Prostate gland (tissue), 2 donors: ENCODE measurements at regions of chr12 and their contacts with region 1.

Region 1: GRCh38 chr12:67068761-67069450 is 200.3 kb upstream of the CAND1 start:
- DNase-seq: peak; percentile 60
- H3K4me3 ChIP-seq: peak overlapping the region; percentile 56 to 64
- H3K27ac ChIP-seq: peak overlapping the region; percentile 77 to 83
- H3K4me1 ChIP-seq: peaks cover 7% of the 10 kb centered on the region
- H3K27me3 ChIP-seq: no peaks in the 10 kb centered on the region
- CTCF ChIP-seq: no peak
- POLR2A ChIP-seq: peak; percentile 18

Region 2: DNA sequence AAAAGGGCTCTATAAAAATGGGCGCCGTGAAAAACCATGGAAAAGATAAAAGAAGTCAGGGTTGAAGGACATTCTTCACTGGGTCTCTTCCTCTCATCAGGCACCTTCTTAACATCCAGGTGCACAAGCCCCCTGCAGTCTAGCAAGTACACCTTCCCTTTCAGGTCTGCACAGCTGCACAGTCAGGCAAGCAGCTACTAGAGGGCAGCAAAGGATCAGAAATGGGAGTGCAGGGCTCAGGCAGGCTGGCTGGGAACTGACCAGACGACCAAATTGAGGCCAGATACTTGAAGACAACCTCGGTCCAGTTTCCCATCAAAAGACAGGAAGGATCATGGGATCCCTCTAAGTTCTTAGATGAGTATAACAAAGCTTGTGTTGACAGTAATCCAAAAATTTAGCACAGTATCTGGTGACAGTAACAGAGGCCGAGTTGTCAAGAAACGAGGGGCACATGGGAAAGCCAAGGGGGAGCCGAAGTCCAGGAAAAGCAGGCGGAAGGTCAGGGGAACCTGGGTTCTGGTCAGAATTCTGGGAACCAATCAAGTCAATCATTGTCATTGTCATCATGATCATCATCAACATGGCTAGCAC is 380.0 kb before region 1 on chr12:
- intact Hi-C with region 1: loop called (anchors 10 kb)
- DNase-seq: peak; percentile 30
- H3K4me3 ChIP-seq: no peak overlapping the region
- H3K27ac ChIP-seq: no peak overlapping the region
- H3K4me1 ChIP-seq: no peaks in the 10 kb centered on the region
- H3K27me3 ChIP-seq: no peaks in the 10 kb centered on the region
- CTCF ChIP-seq: peak in 3 of 4 experiments; percentile 29 to 61 (median 57)
- POLR2A ChIP-seq: no peak

Region 3: DNA sequence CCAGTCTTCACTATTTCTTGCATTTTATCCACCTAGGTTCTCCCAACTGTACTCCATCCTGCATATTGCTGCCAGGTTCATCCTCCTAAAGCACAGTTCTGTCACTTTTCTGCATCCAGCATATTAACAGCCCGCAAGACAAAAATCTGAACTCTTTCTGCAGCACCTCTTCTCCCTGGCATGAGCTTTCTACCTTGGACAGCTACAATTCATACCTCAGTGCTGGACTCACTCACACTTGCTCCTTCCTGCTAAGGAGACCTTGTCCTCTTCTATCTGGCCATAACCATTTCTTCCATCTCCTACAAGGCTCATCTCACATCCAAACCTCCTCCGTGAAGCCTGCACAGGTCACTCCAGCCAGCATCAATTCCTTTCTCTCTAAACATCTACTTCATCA is 219.9 kb before region 1 on chr12:
- intact Hi-C with region 1: no loop called
- DNase-seq: no peak
- H3K4me3 ChIP-seq: no peak overlapping the region
- H3K27ac ChIP-seq: no peak overlapping the region
- H3K4me1 ChIP-seq: no peaks in the 10 kb centered on the region
- H3K27me3 ChIP-seq: no peaks in the 10 kb centered on the region
- CTCF ChIP-seq: no peak
- POLR2A ChIP-seq: no peak

Region 4: DNA sequence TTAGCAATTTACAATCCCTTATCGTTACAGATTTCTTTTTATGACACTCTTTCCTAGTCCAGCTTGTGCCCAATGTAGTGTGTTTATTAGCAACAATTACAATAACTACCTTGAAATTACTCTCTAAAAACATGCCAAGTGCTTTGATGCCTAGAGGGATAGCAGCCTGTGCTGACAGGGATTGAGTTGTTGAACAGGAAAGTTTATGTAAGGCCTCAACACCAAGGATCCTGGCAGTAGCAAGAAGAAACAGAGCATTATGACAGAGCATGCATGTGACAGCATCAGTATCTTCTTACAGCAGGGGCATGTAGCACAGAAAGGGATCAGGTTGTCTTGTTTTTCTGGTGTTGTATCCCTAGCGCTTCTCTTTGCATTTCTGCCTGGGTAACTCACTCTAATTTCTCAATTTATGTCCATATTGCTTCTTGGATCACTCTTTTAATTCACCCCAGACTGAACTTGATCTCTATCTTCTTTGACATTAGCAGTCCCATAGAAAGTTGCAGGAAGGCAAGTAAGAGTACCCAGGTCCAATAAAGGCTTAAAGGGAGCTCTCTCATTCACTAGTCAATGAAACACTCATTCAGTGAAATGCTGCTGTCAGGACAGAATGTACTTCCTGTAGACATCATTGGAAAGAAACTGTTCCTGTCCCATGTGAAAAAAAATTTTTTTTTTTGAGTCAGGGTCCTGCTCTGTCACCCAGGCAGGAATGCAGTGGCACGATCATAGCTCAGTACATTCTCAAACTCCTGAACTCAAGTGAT is 170.0 kb before region 1 on chr12:
- intact Hi-C with region 1: loop called (anchors 10 kb)
- DNase-seq: peak; percentile 29
- H3K4me3 ChIP-seq: no peak overlapping the region
- H3K27ac ChIP-seq: peak overlapping the region in 1 of 2 donors; percentile 7
- H3K4me1 ChIP-seq: no peaks in the 10 kb centered on the region
- H3K27me3 ChIP-seq: no peaks in the 10 kb centered on the region
- CTCF ChIP-seq: no peak
- POLR2A ChIP-seq: no peak

Region 5: DNA sequence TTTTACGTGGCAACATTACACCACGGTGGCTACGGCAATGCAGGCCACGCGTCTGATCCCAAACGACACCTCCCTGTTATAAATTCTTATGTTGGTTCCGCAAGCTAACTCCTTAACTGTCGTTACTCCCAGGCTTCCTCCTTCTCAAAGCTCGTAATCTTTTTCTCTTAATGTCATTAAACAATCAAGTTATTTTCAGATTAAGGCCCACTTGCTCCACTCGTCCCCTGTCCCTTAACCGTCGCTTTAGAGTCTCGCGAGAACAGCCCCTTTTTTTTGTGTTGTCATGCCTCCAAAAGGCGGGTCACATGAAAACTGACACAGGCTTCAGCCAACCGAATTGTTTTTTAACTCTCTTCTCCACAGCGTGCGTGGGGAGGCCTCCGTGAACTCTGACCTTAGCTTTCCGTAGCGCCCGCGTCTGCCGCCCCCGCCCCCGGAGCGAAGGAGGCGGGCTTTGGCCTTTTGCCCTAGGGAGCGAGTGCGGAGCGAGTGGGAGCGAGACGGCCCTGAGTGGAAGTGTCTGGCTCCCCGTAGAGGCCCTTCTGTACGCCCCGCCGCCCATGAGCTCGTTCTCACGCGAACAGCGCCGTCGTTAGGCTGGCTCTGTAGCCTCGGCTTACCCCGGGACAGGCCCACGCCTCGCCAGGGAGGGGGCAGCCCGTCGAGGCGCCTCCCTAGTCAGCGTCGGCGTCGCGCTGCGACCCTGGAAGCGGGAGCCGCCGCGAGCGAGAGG is 200.2 kb after region 1 on chr12 and contains the start of gene CAND1:
- intact Hi-C with region 1: loop called (anchors 5 kb)
- DNase-seq: peak; percentile 98
- H3K4me3 ChIP-seq: peak within 1 kb of the TSS; percentile 67 to 88
- H3K27ac ChIP-seq: peak within 1 kb of the TSS; percentile 98 to 99
- H3K4me1 ChIP-seq: no peaks in the 10 kb centered on the region
- H3K27me3 ChIP-seq: no peaks in the 10 kb centered on the region
- CTCF ChIP-seq: no peak
- POLR2A ChIP-seq: peak; percentile 90
- total RNA-seq, gene CAND1: 65.1 to 118 TPM